B cell (primary cell): ENCODE measurements at regions of chr10 and their contacts with region 1.

Region 1: DNA sequence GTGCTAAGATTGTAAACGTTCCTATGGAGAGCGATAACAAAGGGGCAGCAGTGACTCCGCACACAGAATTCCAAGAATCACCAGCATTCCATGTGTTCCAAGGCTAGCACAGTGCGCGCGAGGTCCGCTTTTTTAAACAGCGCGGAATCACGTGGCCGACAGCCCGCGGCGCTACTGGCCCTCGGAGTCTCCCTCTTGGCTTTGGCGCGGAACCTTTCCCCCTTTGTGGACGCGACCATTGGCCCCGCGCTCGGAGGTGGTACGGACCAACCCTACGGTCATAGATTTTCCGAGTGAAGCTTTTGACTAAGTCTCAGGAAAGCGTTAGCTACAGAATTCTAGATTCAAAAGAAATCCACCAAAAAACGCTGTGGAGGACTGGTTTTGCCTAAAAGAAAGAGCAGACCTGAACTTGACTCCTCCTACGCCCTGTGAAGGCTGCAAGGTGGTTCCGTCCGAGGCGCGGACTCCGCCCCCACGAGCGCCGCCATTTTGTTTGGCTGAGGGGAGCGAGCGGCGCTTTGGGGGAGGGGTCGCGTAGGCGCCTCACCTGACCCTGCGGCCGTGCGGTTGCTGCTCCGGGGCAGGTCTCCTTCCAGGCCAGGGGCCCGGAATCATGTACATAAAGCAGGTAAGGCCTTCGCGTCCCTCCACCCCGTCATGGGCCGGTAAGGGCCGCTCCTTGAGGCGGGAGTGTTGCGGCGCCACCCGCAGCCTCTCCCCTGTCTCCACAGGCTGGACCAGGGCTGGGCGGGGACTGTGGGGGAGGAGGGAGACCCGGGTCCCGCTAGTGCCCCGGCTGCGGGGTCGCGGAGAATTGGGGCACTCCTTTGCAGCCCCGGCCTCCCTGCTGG is at the start of gene SMC3:
- DNase-seq: peak; percentile 98
- ATAC-seq: peak; percentile 89
- H3K4me3 ChIP-seq: peak within 1 kb of the TSS; percentile 82 to 92 (median 90)
- H3K4me3 Mint-ChIP-seq: peak within 1 kb of the TSS; percentile 91
- H3K27ac ChIP-seq: peak within 1 kb of the TSS; percentile 73 to 90
- H3K27ac Mint-ChIP-seq: peak within 1 kb of the TSS; percentile 98
- H3K4me1 ChIP-seq: peaks cover 24 to 27% of the 10 kb centered on the region in 2 donors
- H3K4me1 Mint-ChIP-seq: peaks cover 31% of the 10 kb centered on the region
- H3K27me3 ChIP-seq: peaks cover 0 to 8% (median 5%) of the 10 kb centered on the region in 4 experiments
- H3K27me3 Mint-ChIP-seq: peaks cover 5% of the 10 kb centered on the region
- CTCF ChIP-seq: no peak
- total RNA-seq, gene SMC3: 44.6 and 45.8 TPM in 2 replicates

Region 2: GRCh38 chr10:109922976-109923921 is 644.2 kb before region 1 on chr10 and contains the start of gene XPNPEP1:
- CTCF ChIA-PET with region 1: no interaction called
- POLR2A ChIA-PET with region 1: no interaction called
- intact Hi-C with region 1: loop called (anchors 10 kb)
- DNase-seq: peak; percentile 92
- ATAC-seq: peak; percentile 96
- H3K4me3 ChIP-seq: peak within 1 kb of the TSS; percentile 55 to 91 (median 75)
- H3K4me3 Mint-ChIP-seq: peak within 1 kb of the TSS; percentile 90
- H3K27ac ChIP-seq: peak within 1 kb of the TSS; percentile 60 to 81
- H3K27ac Mint-ChIP-seq: peak within 1 kb of the TSS; percentile 88
- H3K4me1 ChIP-seq: peaks cover 18 to 23% of the 10 kb centered on the region in 2 donors
- H3K4me1 Mint-ChIP-seq: peaks cover 39% of the 10 kb centered on the region
- H3K27me3 ChIP-seq: no peaks in the 10 kb centered on the region
- H3K27me3 Mint-ChIP-seq: no peaks in the 10 kb centered on the region
- CTCF ChIP-seq: no peak
- total RNA-seq, gene XPNPEP1: 56.1 and 60.6 TPM in 2 replicates

Region 3: GRCh38 chr10:110225756-110226542 is 341.5 kb before region 1 on chr10:
- CTCF ChIA-PET with region 1: no interaction called
- POLR2A ChIA-PET with region 1: no interaction called
- intact Hi-C with region 1: loop called (anchors 5 kb)
- DNase-seq: peak; percentile 95
- ATAC-seq: peak; percentile 53
- H3K4me3 ChIP-seq: peak overlapping the region; percentile 42 to 90 (median 77)
- H3K4me3 Mint-ChIP-seq: peak overlapping the region; percentile 97
- H3K27ac ChIP-seq: peak overlapping the region; percentile 79 to 84
- H3K27ac Mint-ChIP-seq: peak overlapping the region; percentile 97
- H3K4me1 ChIP-seq: peaks cover 22 to 25% of the 10 kb centered on the region in 2 donors
- H3K4me1 Mint-ChIP-seq: peaks cover 38% of the 10 kb centered on the region
- H3K27me3 ChIP-seq: peaks cover 0 to 5% (median 2%) of the 10 kb centered on the region in 4 experiments
- H3K27me3 Mint-ChIP-seq: peaks cover 3% of the 10 kb centered on the region
- CTCF ChIP-seq: peak; percentile 65

Region 4: DNA sequence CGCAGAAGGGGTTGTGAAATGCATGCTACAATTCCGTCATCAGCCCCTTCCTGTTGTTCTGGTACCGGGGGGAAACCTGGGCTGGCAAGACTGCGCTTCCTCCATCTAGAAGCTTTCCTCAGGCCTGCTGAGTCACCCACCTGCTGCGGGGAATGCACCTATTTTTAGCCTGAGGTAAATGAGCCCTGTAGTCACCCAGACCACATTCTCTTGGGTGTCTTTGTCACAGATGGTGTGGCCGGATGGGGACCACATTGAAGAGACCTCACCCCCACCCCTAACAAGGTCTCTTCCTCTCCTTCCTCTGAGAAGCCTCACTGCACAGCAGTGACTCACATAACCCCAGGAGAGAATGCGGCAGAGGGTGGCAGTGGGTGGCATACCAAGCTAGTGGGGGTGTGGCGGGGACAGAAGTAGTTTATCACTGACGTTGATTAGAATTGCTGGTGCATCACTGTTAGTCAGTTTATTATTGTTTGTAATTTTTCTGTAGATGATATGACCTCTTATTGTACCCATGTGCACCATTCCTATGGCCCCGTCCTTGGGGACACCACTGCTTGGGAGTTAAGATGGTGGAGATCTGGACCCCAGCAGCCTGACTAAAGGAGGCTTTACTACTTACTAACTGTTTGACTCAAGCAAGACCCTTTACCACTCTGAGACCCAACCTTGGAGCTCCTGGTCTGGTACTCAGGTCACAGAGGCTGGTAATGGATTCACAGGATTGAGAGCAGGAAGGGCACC is 152.7 kb before region 1 on chr10:
- CTCF ChIA-PET with region 1: no interaction called
- POLR2A ChIA-PET with region 1: no interaction called
- intact Hi-C with region 1: loop called (anchors 1 kb)
- DNase-seq: peak; percentile 92
- ATAC-seq: peak; percentile 92
- H3K4me3 ChIP-seq: peak overlapping the region in 1 of 5 experiments; percentile 11
- H3K4me3 Mint-ChIP-seq: peak overlapping the region; percentile 60
- H3K27ac ChIP-seq: no peak overlapping the region
- H3K27ac Mint-ChIP-seq: peak overlapping the region; percentile 76
- H3K4me1 ChIP-seq: peaks cover 57 to 74% of the 10 kb centered on the region in 2 donors
- H3K4me1 Mint-ChIP-seq: peaks cover 69% of the 10 kb centered on the region
- H3K27me3 ChIP-seq: peaks cover 0 to 28% (median 7%) of the 10 kb centered on the region in 4 experiments
- H3K27me3 Mint-ChIP-seq: peaks cover 13% of the 10 kb centered on the region
- CTCF ChIP-seq: no peak

Region 5: GRCh38 chr10:110547139-110547761 is 20.2 kb before region 1 on chr10:
- CTCF ChIA-PET with region 1: interaction called, 6 read pairs
- POLR2A ChIA-PET with region 1: no interaction called
- intact Hi-C with region 1: loop called (anchors 1 kb)
- DNase-seq: peak; percentile 76
- ATAC-seq: peak; percentile 68
- H3K4me3 ChIP-seq: no peak overlapping the region
- H3K4me3 Mint-ChIP-seq: no peak overlapping the region
- H3K27ac ChIP-seq: no peak overlapping the region
- H3K27ac Mint-ChIP-seq: no peak overlapping the region
- H3K4me1 ChIP-seq: no peaks in the 10 kb centered on the region
- H3K4me1 Mint-ChIP-seq: peaks cover 4% of the 10 kb centered on the region
- H3K27me3 ChIP-seq: peaks cover 0 to 9% (median 4%) of the 10 kb centered on the region in 4 experiments
- H3K27me3 Mint-ChIP-seq: peaks cover 24% of the 10 kb centered on the region
- CTCF ChIP-seq: peak; percentile 85

Region 6: DNA sequence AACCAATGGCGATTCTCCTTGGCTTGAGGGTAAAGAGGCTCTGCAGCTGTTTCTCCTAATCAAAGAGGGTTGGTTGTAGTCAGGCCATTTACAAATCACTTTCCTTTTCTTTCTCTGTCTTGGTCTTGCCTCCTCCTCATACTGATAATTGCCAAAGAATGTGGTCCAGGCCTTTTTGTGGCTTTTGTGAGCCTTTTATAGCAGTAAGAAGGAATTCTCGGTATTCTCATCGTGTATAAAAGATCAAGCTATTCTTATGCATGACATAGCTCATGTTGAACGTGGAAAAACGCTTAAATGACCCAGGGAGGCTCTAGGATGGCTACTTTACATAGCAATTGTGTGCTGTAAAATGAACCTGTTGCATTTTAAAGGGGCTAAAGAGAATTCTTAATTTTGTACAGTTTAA is 139.3 kb after region 1 on chr10:
- CTCF ChIA-PET with region 1: no interaction called
- POLR2A ChIA-PET with region 1: no interaction called
- intact Hi-C with region 1: no loop called
- DNase-seq: no peak
- ATAC-seq: no peak
- H3K4me3 ChIP-seq: no peak overlapping the region
- H3K4me3 Mint-ChIP-seq: no peak overlapping the region
- H3K27ac ChIP-seq: no peak overlapping the region
- H3K27ac Mint-ChIP-seq: no peak overlapping the region
- H3K4me1 ChIP-seq: no peaks in the 10 kb centered on the region
- H3K4me1 Mint-ChIP-seq: no peaks in the 10 kb centered on the region
- H3K27me3 ChIP-seq: no peaks in the 10 kb centered on the region
- H3K27me3 Mint-ChIP-seq: peaks cover 11% of the 10 kb centered on the region
- CTCF ChIP-seq: no peak

Region 7: GRCh38 chr10:110871298-110872084 is 304.1 kb after region 1 on chr10 and contains the start of gene PDCD4:
- CTCF ChIA-PET with region 1: no interaction called
- POLR2A ChIA-PET with region 1: no interaction called
- intact Hi-C with region 1: loop called (anchors 2 kb)
- DNase-seq: peak; percentile 92
- ATAC-seq: peak; percentile 74
- H3K4me3 ChIP-seq: peak within 1 kb of the TSS; percentile 82 to 94 (median 85)
- H3K4me3 Mint-ChIP-seq: peak within 1 kb of the TSS; percentile 91
- H3K27ac ChIP-seq: peak within 1 kb of the TSS; percentile 89 to 94
- H3K27ac Mint-ChIP-seq: peak within 1 kb of the TSS; percentile 96
- H3K4me1 ChIP-seq: peaks cover 61% of the 10 kb centered on the region in 2 donors
- H3K4me1 Mint-ChIP-seq: peaks cover 60% of the 10 kb centered on the region
- H3K27me3 ChIP-seq: no peaks in the 10 kb centered on the region
- H3K27me3 Mint-ChIP-seq: no peaks in the 10 kb centered on the region
- CTCF ChIP-seq: no peak
- total RNA-seq, gene PDCD4: 169 and 185 TPM in 2 replicates